Panc1 (cell line): ENCODE measurements at regions of chr19 and their contacts with region 1.

Region 1: GRCh38 chr19:44796701-44797115 is 12.2 kb upstream of the BCAM start:
- DNase-seq: no peak
- ATAC-seq: peak; percentile 74
- H3K4me3 ChIP-seq: no peak overlapping the region
- H3K27ac ChIP-seq: peak overlapping the region; percentile 29; the same call in 1 of the 2 replicates
- H3K4me1 ChIP-seq: peaks cover 13% of the 10 kb centered on the region
- H3K27me3 ChIP-seq: no peaks in the 10 kb centered on the region
- CTCF ChIP-seq: no peak

Region 2: GRCh38 chr19:44806915-44807561 is 10.3 kb after region 1 on chr19:
- CTCF ChIA-PET with region 1: interaction called, 12 read pairs
- POLR2A ChIA-PET with region 1: no interaction called
- in situ Hi-C with region 1: no loop called
- intact Hi-C with region 1: no loop called
- DNase-seq: no peak
- ATAC-seq: peak; percentile 33; the same call in 1 of the 2 replicates
- H3K4me3 ChIP-seq: no peak overlapping the region
- H3K27ac ChIP-seq: peak overlapping the region; percentile 26
- H3K4me1 ChIP-seq: peaks cover 13% of the 10 kb centered on the region
- H3K27me3 ChIP-seq: no peaks in the 10 kb centered on the region
- CTCF ChIP-seq: no peak